PC-9 (cell line): ENCODE measurements at regions of chr4 and their contacts with region 1.

Region 1: DNA sequence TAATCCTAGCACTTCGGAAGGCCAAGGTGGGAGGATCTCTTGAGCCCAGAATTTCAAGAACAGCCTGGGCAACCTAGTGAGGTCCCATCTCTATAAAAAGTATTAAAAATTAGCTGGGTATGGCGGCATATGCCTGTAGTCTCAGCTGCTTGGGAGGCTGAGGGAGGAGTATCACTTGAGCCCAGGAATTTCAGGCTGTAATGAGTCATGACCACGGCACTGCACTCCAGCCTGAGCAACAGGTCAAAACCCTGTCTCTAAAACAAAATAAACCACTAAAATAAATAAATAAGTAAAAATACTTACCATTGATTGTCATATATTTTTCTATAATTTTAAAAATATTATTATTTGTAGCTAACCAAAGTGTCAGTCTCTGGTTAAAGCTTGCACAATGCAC is 315.6 kb upstream of the SMIM31 start:
- DNase-seq: no peak
- H3K4me3 ChIP-seq: no peak overlapping the region
- H3K27ac ChIP-seq: no peak overlapping the region
- H3K4me1 ChIP-seq: peaks cover 18% of the 10 kb centered on the region; the same call in 1 of the 2 replicates
- H3K27me3 ChIP-seq: no peaks in the 10 kb centered on the region
- CTCF ChIP-seq: no peak

Region 2: DNA sequence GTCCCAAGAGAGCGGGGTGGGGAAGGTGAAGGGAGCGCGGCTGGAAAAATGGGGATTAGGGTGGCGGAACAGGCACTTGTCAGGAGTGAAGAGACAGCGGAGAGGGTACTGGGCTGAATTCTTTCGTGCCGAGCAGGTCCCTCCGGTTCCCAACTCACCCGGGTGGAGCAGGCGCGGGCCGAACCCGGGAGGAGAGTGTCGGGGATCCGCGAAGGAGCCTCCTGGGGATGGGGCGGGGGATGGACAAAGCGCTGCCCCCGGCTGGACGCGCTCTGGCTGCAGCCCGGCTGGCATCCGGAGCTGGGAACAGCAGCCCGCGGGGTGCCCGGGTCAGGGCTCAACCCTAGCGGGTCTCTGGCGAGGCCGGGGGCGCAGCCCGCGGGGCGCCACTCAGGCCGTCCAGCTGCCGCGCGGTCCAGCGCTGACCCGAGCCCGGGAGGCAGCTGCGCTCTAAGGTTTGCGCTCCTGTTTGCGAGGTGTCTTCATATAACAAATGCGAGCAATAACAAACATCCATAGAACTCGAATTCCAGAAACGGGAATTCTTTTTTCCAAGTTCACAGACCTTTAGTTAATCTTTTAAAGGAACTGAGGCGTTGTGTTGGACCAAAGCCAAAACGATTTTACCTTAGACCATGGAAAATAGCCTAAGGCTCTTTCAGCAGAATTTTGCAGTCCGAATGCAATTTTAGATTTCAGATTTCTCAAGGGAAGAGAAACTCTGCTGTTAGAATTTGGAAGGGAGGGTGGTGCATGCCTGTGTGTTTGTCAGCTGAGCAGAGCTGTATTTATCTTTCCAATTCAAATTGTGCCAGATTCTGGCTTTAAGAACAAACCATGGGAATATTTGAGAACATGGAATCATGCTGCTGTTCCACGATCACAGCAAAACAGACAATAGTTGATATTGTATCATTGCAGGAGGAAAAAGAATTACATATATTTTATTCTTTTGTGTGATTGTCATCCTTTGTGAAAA is 1093.9 kb before region 1 on chr4:
- CTCF ChIA-PET with region 1: no interaction called
- POLR2A ChIA-PET with region 1: no interaction called
- intact Hi-C with region 1: no loop called
- DNase-seq: no peak
- H3K4me3 ChIP-seq: no peak overlapping the region
- H3K27ac ChIP-seq: no peak overlapping the region
- H3K4me1 ChIP-seq: no peaks in the 10 kb centered on the region
- H3K27me3 ChIP-seq: no peaks in the 10 kb centered on the region
- CTCF ChIP-seq: no peak

Region 3: DNA sequence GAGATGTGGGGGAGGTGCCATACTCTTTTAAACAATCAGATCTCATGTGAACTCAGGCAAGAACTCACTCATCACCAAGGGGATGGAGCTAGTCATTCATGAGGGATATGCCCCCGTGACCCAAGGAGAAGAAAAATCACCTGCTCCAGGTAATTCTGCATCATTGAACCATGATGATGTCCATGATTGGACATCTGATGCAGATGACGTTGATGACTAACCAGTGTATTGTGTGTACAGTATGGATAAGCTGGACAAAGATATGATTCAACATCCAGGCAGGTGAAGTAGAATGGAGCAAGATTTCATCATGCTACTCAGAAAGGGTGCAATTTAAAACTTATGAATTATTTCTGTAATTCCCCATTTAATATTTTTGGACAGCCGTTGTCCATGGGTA is 29.2 kb after region 1 on chr4:
- CTCF ChIA-PET with region 1: no interaction called
- POLR2A ChIA-PET with region 1: interaction called, 11 read pairs
- intact Hi-C with region 1: no loop called
- DNase-seq: no peak
- H3K4me3 ChIP-seq: no peak overlapping the region
- H3K27ac ChIP-seq: 0 out of 2 replicates have a peak overlapping the region, but pooled peaks have one; percentile 43
- H3K4me1 ChIP-seq: no peaks in the 10 kb centered on the region
- H3K27me3 ChIP-seq: no peaks in the 10 kb centered on the region
- CTCF ChIP-seq: no peak

Region 4: GRCh38 chr4:164648151-164648848 is 210.0 kb after region 1 on chr4:
- CTCF ChIA-PET with region 1: no interaction called
- POLR2A ChIA-PET with region 1: no interaction called
- intact Hi-C with region 1: loop called (anchors 5 kb)
- DNase-seq: no peak
- H3K4me3 ChIP-seq: no peak overlapping the region
- H3K27ac ChIP-seq: no peak overlapping the region
- H3K4me1 ChIP-seq: no peaks in the 10 kb centered on the region
- H3K27me3 ChIP-seq: no peaks in the 10 kb centered on the region
- CTCF ChIP-seq: no peak